ENCODE measurements at regions of chr6 and their contacts with region 1.

Region 1: DNA sequence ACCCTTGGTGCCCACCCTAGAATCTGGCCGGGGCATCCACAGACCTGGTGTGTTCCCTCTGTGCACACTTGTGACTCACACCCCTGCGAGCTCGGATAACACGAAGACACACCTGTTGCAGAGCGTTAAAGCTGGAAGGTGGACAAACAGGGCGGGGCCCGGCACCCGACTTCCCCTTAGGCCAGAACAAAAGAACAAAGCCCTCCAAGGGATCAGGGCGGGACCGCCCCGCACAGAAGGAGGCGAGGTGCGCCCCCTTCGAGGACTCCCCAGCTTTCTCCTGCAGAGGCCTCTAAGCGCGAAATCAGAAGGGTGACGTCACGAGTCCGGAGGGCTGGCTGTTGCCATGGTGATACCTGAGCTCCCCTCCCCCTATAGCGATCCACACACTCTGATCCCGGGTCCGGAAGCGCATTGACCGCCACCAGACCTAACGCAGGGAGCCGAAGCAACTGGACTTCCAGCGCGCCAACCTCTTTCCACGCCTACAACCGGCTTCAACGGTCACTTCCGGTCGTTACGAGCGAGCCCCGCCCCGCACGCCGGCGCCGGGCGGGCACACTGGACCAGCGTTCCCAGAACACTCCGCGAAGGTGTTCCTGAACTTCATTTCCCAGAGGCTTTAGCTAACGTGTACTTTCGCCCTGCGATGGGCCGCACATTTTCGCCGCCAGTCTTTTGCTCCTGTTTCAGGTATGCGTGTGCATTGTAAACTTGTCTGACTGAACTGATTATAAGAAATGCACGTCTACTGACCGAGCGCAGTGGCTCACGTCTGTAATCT is at the start of gene ZNF184:
- DNase-seq: peak; percentile 91
- H3K4me3 Mint-ChIP-seq: peak within 1 kb of the TSS; percentile 95
- H3K27ac Mint-ChIP-seq: peak within 1 kb of the TSS; percentile 95
- H3K4me1 Mint-ChIP-seq: peaks cover 45% of the 10 kb centered on the region
- H3K27me3 Mint-ChIP-seq: no peaks in the 10 kb centered on the region
- total RNA-seq, gene ZNF184: 13.0 to 14.3 TPM

Region 2: DNA sequence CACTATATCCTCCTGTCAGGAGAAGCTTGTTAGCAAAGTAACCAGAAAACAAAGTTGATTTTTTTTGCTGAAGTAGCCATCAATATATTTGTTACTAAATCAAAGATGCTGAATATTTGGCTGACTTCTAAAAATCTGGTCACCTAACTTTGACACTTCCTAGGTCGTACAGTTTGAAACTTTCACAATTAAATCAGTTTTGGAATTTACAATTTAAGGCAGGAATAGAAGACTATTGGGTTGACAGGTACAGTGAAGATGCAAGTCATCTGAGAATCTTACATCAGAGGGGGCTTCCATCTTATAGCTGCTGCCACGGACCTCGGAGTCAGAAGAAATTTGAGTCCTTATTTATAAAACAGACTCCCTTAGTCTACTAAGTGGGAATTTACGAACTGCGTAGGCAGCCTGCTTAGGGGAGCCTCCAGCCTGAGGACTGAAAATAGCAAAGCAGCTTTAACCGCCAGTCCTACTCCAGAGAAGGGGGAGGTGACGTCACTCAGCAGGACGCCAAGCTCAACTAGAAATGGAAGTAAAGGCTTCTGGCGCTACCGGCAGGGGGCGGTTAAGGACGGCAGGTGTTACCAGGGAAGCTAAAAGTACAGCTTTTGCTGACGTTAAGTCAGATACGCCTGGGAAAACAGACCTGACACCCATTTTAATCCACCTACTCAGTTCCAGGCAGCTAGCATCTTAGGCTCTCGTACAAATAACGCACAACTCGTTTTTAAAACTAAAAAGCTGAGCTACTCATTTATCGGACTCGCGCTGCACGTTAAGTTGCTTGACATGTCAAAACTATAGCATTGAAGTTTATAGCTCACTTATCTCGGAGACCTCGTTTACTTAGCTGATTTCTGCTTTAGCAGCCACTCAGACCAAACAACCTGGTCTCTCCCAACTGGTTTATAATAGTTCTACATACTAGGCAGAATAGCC is 1446.6 kb before region 1 on chr6:
- CTCF ChIA-PET with region 1: no interaction called
- intact Hi-C with region 1: loop called (anchors 5 kb)
- DNase-seq: peak; percentile 98
- H3K4me3 Mint-ChIP-seq: peak overlapping the region; percentile 87
- H3K27ac Mint-ChIP-seq: peak overlapping the region; percentile 99
- H3K4me1 Mint-ChIP-seq: peaks cover 31% of the 10 kb centered on the region
- H3K27me3 Mint-ChIP-seq: no peaks in the 10 kb centered on the region

Region 3: DNA sequence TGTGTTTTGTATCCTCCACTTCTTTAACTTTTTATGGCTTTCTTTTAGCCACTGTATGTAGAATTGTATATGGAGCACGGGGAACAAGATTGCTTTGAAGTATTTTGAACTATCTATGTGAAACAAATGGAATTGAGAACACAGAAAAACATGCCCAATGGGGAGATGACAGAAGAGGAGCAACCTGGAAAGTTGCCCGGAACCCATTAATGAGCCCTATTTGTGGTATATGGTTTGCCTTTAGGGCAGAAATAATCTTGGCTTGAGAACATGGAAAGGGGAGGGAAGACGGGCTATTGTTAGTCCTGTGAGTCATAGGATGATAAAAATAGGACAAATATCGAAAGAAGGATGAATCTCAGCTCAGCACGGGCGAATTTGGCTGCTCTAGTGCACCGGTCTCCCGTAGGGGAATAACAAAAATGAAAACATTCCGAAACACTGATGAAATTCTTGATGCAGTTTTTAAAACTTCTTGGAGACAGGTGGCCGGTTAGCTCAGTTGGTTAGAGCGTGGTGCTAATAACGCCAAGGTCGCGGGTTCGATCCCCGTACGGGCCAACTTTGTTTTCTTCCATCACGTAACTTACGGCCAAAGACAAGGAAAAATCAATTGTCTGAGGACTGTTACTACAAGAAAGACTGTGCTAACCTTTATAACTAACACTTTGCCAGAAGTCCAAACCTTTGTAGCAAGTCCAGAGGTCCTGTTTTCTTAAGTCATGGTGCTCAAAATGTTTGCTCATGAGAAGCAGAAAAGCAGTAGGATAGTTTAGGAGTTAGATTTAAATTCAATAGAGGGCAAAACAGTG is 919.0 kb before region 1 on chr6:
- CTCF ChIA-PET with region 1: no interaction called
- intact Hi-C with region 1: loop called (anchors 10 kb)
- DNase-seq: peak; percentile 91
- H3K4me3 Mint-ChIP-seq: no peak overlapping the region
- H3K27ac Mint-ChIP-seq: no peak overlapping the region
- H3K4me1 Mint-ChIP-seq: peaks cover 26% of the 10 kb centered on the region
- H3K27me3 Mint-ChIP-seq: no peaks in the 10 kb centered on the region

Region 4: GRCh38 chr6:27157459-27158315 is 315.1 kb before region 1 on chr6:
- CTCF ChIA-PET with region 1: interaction called, 5 read pairs
- intact Hi-C with region 1: loop called (anchors 1 kb)
- DNase-seq: peak; percentile 94
- H3K4me3 Mint-ChIP-seq: peak overlapping the region; percentile 76
- H3K27ac Mint-ChIP-seq: peak overlapping the region; percentile 83
- H3K4me1 Mint-ChIP-seq: peaks cover 43% of the 10 kb centered on the region
- H3K27me3 Mint-ChIP-seq: no peaks in the 10 kb centered on the region

Region 5: DNA sequence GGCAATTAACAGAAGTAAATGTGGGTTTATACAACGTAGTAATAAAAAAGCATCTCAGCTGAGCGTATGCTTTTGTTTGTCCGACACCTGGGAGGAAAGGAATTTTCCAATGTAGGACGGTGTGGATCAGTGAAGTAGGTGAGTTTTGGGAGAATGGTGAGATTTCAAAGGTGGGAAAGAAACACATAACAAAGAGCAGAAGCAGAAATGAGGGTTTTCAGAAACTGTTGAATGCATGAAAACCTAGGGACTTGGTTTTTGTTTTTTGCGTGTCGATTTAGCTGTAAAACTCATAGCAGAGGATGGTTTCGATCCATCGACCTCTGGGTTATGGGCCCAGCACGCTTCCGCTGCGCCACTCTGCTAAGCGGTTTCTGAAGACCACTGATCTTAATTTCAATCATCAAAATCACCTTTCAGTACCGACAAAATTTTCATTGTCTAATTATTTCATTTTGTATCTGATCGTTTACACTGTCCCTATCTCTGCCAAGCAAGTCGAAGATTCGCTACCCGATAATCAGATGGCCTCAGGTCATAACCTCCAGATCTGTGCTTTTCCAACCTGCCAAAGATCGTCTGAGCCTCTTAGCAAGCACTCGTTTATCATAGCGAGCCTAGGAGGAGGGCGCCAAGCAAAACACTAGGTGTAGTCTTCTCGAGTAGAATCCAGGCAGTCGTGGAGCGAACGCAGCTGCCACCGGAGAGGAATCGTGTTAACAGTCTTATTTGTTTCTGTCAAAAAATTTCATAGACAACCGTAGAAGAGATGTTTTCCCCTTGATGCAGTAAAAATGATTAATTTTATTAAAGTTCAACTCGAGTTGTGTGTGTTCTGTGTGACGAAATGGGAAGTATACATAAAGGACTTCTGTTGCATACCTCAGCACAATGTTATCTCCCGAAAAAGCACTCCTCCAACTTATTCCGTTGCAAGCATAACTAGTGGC is 139.8 kb before region 1 on chr6:
- CTCF ChIA-PET with region 1: no interaction called
- intact Hi-C with region 1: loop called (anchors 2 kb)
- DNase-seq: peak; percentile 59
- H3K4me3 Mint-ChIP-seq: peak overlapping the region; percentile 81
- H3K27ac Mint-ChIP-seq: peak overlapping the region; percentile 87
- H3K4me1 Mint-ChIP-seq: peaks cover 5% of the 10 kb centered on the region
- H3K27me3 Mint-ChIP-seq: peaks cover 30% of the 10 kb centered on the region

Region 6: DNA sequence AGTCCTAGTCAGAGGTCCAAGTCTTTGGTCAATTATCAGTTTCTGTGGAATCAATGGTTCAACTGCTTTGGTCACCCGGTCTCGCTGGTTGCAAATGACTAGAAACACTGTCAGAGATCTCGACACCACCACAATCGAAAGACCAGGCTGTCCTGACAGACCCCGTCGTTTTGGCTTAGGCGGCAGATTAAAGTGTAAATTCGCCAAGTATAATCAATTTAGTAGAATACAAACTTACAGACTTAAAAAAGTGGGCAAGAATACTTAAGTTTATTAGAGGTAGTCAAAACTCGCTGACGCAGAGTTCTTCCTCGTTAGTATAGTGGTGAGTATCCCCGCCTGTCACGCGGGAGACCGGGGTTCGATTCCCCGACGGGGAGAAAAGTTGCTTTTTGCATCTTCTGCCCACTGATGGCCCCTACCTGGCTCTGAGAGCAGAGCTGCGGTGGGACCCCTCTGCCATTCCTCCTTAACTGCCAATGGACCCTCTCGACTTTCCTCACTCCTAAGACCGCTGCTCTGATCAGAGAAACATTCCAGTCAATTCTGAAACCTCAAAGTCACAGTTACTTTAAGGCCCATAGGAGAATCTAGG is 30.7 kb after region 1 on chr6:
- CTCF ChIA-PET with region 1: no interaction called
- intact Hi-C with region 1: loop called (anchors 1 kb)
- DNase-seq: peak; percentile 88
- H3K4me3 Mint-ChIP-seq: peak overlapping the region; percentile 90
- H3K27ac Mint-ChIP-seq: peak overlapping the region; percentile 86
- H3K4me1 Mint-ChIP-seq: peaks cover 24% of the 10 kb centered on the region
- H3K27me3 Mint-ChIP-seq: peaks cover 1% of the 10 kb centered on the region

Region 7: DNA sequence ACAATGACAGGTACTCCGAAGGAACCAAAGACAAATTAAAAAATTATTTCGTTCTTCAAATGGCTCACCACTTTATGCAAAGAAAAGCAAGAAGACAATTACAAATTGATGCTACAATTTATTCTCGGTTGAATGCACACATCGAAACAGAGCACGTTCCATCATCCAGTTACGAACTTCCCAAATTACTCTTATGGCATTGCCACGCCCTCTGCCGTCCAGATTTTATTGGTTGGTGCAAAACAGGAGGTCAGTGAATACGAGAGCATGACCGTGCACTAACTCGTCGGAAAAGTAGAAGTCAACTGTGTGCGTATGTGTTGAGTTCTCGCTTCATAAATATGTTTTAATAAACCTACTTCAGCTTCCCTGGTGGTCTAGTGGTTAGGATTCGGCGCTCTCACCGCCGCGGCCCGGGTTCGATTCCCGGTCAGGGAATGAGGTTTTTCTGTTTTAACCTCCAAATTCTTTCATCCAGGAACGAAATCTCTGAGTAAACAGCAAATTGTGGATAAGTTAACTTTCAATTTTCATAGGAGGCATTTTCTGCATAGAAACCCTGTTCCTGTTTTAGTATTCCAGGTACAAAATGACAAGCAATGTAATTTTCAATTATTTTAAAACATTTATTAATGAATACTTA is 1509.1 kb after region 1 on chr6:
- CTCF ChIA-PET with region 1: no interaction called
- intact Hi-C with region 1: loop called (anchors 10 kb)
- DNase-seq: peak; percentile 78
- H3K4me3 Mint-ChIP-seq: peak overlapping the region; percentile 88
- H3K27ac Mint-ChIP-seq: peak overlapping the region; percentile 84
- H3K4me1 Mint-ChIP-seq: peaks cover 50% of the 10 kb centered on the region
- H3K27me3 Mint-ChIP-seq: peaks cover 29% of the 10 kb centered on the region